Activated naive CD4-positive, alpha-beta T cell treated with anti-CD3 and anti-CD28 coated beads for 36 hours (primary cell): ENCODE measurements at regions of chr10 and their contacts with region 1.

Region 1: DNA sequence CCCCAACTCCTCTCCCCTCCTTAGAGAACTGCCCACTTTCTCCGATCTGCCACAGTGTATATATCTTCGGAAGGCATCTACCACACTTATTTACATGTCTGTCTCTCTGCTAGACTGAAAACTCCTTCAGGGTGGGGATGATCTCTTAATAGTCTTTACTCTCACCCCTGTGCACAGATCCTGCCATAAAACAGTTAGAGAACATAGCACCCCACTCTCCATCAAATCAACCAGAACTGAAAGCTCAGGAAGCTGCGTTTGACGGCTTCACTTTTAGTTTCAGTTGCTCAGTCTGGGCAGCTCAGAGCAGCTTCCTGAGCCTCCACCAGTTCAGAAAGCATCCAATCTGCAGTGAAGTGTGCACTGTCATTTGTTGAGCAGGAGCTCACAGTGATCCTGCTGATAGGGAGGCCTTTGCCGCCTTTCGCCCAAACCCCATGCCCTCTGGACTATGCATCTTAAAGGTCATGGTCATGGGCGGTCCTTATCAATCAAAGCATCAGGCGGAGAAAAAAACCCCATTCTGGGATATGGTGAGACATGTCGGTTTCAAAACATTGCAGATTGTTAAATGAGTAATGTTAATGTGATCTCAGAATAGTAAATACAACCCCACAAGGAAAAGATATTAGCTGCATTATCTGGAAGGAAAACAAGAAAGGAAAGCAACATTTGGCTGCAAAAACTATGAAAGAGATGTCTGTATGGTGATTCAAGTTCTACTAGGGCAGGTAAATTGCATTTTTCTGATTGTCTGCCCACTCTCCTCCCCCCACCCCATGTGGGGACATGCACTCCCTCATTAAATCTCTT is 167.1 kb upstream of the ADO start:
- DNase-seq: peak; percentile 81
- H3K4me3 Mint-ChIP-seq: no peak overlapping the region
- H3K27ac Mint-ChIP-seq: no peak overlapping the region
- H3K4me1 Mint-ChIP-seq: peaks cover 14% of the 10 kb centered on the region
- H3K27me3 Mint-ChIP-seq: no peaks in the 10 kb centered on the region

Region 2: DNA sequence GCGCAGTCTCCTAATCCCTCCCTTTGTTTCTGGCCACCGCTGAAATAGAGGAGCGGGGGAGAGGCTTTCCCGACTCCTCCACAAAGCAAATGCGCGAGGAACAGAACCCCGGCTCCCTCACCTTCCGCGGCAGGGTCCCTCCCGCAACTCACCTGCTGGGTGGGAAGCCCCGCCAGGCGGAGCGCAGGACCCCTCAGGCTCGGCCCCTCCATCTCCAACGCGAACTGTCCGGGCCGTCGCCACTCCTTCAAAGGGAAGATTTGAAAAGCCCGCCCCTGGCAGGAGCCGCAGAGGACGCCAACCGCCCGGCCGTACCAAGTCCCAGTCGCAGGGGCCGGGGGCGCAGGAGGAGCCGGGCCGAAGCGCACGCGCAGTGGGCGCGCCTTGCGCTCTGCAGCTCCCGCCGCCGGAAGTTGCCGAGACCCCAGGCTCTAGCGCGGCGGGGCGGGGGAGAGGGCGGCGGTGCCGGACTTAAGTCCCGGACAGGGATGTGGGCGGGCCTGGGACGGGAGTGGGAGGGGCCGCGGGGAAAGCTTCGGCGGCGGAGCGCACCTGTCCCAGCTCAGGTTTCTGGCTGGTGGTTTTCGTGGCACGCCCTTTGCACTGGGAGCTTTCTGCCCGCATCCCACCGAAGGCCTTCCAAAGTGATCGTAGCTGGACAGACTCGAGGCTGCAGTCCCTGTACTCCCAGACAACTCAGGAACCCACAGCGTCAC is 368.9 kb before region 1 on chr10 and contains the start of gene RTKN2:
- CTCF ChIA-PET with region 1: no interaction called
- intact Hi-C with region 1: loop called (anchors 5 kb)
- DNase-seq: peak; percentile 78
- H3K4me3 Mint-ChIP-seq: peak within 1 kb of the TSS; percentile 72
- H3K27ac Mint-ChIP-seq: peak within 1 kb of the TSS; percentile 28
- H3K4me1 Mint-ChIP-seq: peaks cover 23% of the 10 kb centered on the region
- H3K27me3 Mint-ChIP-seq: peaks cover 13% of the 10 kb centered on the region
- total RNA-seq, gene RTKN2: 4.7 to 5.4 TPM

Region 3: GRCh38 chr10:62352356-62352970 is 285.0 kb before region 1 on chr10:
- CTCF ChIA-PET with region 1: no interaction called
- intact Hi-C with region 1: no loop called
- DNase-seq: peak; percentile 46
- H3K4me3 Mint-ChIP-seq: no peak overlapping the region
- H3K27ac Mint-ChIP-seq: no peak overlapping the region
- H3K4me1 Mint-ChIP-seq: peaks cover 19% of the 10 kb centered on the region
- H3K27me3 Mint-ChIP-seq: peaks cover 6% of the 10 kb centered on the region

Region 4: DNA sequence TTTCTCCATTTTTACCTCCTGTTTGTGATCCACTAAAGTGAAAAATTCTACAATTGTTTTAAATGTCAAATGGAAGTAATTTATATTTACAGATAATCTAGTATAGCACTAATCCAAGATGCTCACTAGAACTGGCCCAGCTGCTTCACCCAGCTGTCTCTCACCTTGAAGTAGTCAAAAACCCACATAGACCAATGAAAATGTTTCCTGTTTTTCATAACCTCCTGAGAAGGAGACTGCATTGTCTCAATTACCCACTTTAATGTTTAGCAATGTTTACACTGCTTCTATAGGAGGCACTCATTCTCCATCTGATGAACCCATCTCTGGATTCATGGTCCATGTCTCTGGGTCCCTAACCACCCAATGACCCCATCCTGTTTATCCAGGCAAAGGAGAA is 110.9 kb after region 1 on chr10:
- CTCF ChIA-PET with region 1: interaction called, 4 read pairs
- intact Hi-C with region 1: loop called (anchors 1 kb)
- DNase-seq: no peak
- H3K4me3 Mint-ChIP-seq: no peak overlapping the region
- H3K27ac Mint-ChIP-seq: no peak overlapping the region
- H3K4me1 Mint-ChIP-seq: peaks cover 26% of the 10 kb centered on the region
- H3K27me3 Mint-ChIP-seq: no peaks in the 10 kb centered on the region

Region 5: GRCh38 chr10:62804356-62805230 is 167.1 kb after region 1 on chr10 and contains the start of gene ADO:
- CTCF ChIA-PET with region 1: interaction called, 3 read pairs
- intact Hi-C with region 1: loop called (anchors 1 kb)
- DNase-seq: peak; percentile 82
- H3K4me3 Mint-ChIP-seq: peak within 1 kb of the TSS; percentile 97
- H3K27ac Mint-ChIP-seq: peak within 1 kb of the TSS; percentile 100
- H3K4me1 Mint-ChIP-seq: peaks cover 37% of the 10 kb centered on the region
- H3K27me3 Mint-ChIP-seq: no peaks in the 10 kb centered on the region
- total RNA-seq, gene ADO: 24.9 to 26.2 TPM

Region 6: GRCh38 chr10:62992145-62992721 is 354.8 kb after region 1 on chr10:
- CTCF ChIA-PET with region 1: no interaction called
- intact Hi-C with region 1: loop called (anchors 1 kb)
- DNase-seq: peak; percentile 24
- H3K4me3 Mint-ChIP-seq: peak overlapping the region; percentile 1
- H3K27ac Mint-ChIP-seq: peak overlapping the region; percentile 71
- H3K4me1 Mint-ChIP-seq: peaks cover 43% of the 10 kb centered on the region
- H3K27me3 Mint-ChIP-seq: peaks cover 3% of the 10 kb centered on the region